ENCODE measurements at regions of chr7 and their contacts with region 1.

Region 1: GRCh38 chr7:29189743-29190201 is 4.8 kb upstream of the CHN2 start:
- DNase-seq: peak in 32 of 35 experiments; percentile 20 to 74 (median 42)
- ATAC-seq: peak; percentile 51 to 69 (median 62)
- H3K4me3 ChIP-seq: no peak overlapping the region
- H3K4me3 Mint-ChIP-seq: no peak overlapping the region
- H3K27ac ChIP-seq: no peak overlapping the region
- H3K27ac Mint-ChIP-seq: no peak overlapping the region
- H3K4me1 ChIP-seq: peaks cover 0 to 9% of the 10 kb centered on the region in 2 experiments
- H3K4me1 Mint-ChIP-seq: peaks cover 0 to 5% (median 0%) of the 10 kb centered on the region in 3 donors
- H3K27me3 ChIP-seq: peaks cover 0 to 12% of the 10 kb centered on the region in 2 experiments
- H3K27me3 Mint-ChIP-seq: peaks cover 12 to 23% of the 10 kb centered on the region in 2 donors

Region 2: DNA sequence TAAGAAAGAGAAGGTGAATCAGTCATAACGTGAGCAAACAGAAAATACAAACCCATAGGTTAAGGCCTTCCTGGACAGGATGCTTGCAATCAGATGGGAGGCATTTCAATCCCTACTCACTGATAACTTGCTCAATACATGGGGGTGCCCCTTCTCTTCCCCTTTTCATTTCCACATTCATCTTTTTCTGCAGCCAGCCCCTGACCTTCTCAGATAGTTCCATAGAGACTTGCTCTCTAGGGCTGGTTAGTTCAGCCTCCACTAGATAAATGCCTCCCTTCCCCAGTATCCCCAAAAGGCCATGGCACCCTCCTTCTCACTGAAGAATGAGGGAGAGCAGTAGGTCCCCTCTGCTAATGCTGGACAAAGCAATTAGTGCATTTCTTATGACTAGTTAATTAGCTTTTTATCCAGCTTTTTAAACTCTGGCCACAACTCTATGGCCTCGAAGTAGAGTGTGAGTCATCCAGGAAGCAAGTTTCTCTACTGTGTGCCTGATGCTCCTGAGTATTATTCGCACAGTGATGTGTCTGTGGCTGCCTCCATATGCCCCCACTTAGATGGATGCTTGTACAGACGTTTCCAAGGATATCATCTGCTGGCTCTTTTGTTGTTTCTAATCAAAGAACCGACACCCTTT is 17.5 kb after region 1 on chr7:
- CTCF ChIA-PET with region 1: no interaction called
- POLR2A ChIA-PET with region 1: no interaction called
- DNase-seq: no peak
- ATAC-seq: peak in 3 of 4 experiments; percentile 22 to 69 (median 43)
- H3K4me3 ChIP-seq: no peak overlapping the region
- H3K4me3 Mint-ChIP-seq: no peak overlapping the region
- H3K27ac ChIP-seq: no peak overlapping the region
- H3K27ac Mint-ChIP-seq: no peak overlapping the region
- H3K4me1 ChIP-seq: peaks cover 9 to 12% of the 10 kb centered on the region in 2 experiments
- H3K4me1 Mint-ChIP-seq: peaks cover 10 to 19% (median 15%) of the 10 kb centered on the region in 3 donors
- H3K27me3 ChIP-seq: no peaks in the 10 kb centered on the region
- H3K27me3 Mint-ChIP-seq: no peaks in the 10 kb centered on the region

Region 3: DNA sequence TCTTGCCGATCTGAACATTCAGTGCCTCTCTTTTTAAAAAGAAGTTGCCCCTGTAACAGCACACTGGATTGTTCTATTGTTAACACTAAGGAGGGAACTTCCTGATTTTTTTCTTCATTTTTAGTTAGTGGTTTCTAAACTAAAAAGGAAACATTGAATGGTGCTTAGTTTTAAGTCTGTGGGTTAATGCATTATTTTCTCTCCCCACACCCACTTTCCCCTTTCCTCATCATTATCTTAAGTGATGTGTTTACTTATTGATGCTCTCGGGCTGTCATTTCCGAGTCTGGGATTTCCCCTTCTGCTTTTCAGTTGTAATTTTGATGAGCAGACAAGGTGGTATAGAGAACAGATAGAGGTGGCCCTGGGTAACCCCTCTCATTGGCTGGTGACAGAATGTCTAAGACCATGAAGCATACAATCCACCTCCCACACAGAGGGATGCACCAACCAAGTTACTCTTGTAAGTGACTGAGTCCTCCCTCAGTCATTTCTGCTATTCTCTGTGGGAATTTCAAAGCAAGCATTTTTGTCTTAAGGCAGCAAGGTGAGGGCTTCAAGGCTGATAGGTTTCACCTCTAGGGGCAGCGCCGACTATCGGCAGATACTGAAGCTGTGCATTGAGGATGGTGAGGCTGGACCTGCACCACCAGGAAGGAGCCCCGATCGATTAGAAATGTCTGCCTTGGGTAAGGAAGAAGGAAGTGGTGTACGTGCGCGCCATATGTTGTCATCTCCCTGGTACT is 54.3 kb after region 1 on chr7:
- CTCF ChIA-PET with region 1: no interaction called
- POLR2A ChIA-PET with region 1: no interaction called
- DNase-seq: peak in 28 of 35 experiments; percentile 9 to 64 (median 20)
- ATAC-seq: peak; percentile 52 to 93 (median 62)
- H3K4me3 ChIP-seq: no peak overlapping the region
- H3K4me3 Mint-ChIP-seq: peak overlapping the region in 1 of 3 donors; percentile 18
- H3K27ac ChIP-seq: no peak overlapping the region
- H3K27ac Mint-ChIP-seq: peak overlapping the region in 1 of 2 donors; percentile 33
- H3K4me1 ChIP-seq: peaks cover 4 to 13% of the 10 kb centered on the region in 2 experiments
- H3K4me1 Mint-ChIP-seq: peaks cover 16 to 19% (median 17%) of the 10 kb centered on the region in 3 donors
- H3K27me3 ChIP-seq: no peaks in the 10 kb centered on the region
- H3K27me3 Mint-ChIP-seq: no peaks in the 10 kb centered on the region

Region 4: DNA sequence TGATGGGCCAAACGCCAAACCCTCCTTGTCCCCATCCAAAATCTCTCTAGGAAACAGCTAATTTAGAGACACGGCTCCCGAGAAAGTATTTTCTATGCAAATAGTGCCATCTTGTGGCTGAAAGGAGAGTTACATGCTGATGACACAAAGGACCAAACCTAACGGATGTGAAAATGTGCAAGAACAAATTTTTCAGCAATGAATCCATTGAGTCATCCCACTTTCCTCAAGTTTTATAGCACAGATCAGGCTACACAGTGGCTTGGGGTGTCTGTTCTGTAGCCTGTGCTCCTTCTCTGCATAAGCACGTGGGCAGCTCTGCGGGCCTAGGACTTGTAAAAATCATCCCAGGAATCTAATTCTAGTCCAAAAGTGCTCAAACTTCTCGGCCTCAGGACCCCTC is 219.1 kb after region 1 on chr7:
- CTCF ChIA-PET with region 1: interaction called, 30 to 36 read pairs
- POLR2A ChIA-PET with region 1: no interaction called
- DNase-seq: peak in 28 of 35 experiments; percentile 2 to 79 (median 27)
- ATAC-seq: peak; percentile 48 to 62 (median 55)
- H3K4me3 ChIP-seq: no peak overlapping the region
- H3K4me3 Mint-ChIP-seq: no peak overlapping the region
- H3K27ac ChIP-seq: no peak overlapping the region
- H3K27ac Mint-ChIP-seq: no peak overlapping the region
- H3K4me1 ChIP-seq: no peaks in the 10 kb centered on the region
- H3K4me1 Mint-ChIP-seq: no peaks in the 10 kb centered on the region
- H3K27me3 ChIP-seq: no peaks in the 10 kb centered on the region
- H3K27me3 Mint-ChIP-seq: no peaks in the 10 kb centered on the region

Region 5: DNA sequence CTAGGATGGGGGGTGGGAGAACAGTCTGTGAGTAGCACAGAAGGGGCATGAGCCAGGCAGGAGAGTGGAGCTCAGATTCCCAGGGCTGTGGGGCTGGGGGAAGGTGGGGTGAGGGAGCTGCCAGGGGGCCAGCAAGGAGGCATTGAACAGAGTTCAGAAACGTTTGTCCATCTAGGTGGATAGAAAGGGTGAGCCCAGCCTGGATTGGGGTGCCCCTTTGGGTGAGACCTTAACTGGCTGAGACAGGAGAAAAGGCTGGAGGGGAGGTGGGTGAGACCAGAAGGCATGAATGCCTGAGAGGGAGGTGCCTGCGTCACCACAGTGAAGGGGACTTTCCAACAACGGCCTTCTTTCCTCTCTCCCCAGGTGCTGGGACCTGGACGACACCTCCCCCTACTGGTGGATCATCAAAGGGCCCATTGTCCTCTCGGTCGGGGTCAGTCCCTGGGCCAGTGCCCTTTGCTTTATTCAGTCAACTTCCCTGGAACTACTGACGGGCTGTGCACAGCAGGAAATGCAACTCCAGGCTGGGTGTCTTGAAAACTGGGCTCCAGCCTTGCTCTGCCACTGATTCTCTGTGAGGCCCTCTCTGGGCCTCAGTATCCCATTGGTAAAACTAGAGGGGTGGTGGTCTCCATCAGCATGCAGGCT is 1785.0 kb after region 1 on chr7:
- CTCF ChIA-PET with region 1: no interaction called
- POLR2A ChIA-PET with region 1: no interaction called
- DNase-seq: peak in 5 of 35 experiments; percentile 3 to 45 (median 7)
- ATAC-seq: peak in 1 of 4 experiments; percentile 78
- H3K4me3 ChIP-seq: no peak overlapping the region
- H3K4me3 Mint-ChIP-seq: no peak overlapping the region
- H3K27ac ChIP-seq: no peak overlapping the region
- H3K27ac Mint-ChIP-seq: no peak overlapping the region
- H3K4me1 ChIP-seq: no peaks in the 10 kb centered on the region
- H3K4me1 Mint-ChIP-seq: peaks cover 0 to 2% (median 0%) of the 10 kb centered on the region in 3 donors
- H3K27me3 ChIP-seq: peaks cover 2 to 37% of the 10 kb centered on the region in 2 experiments
- H3K27me3 Mint-ChIP-seq: peaks cover 32 to 34% of the 10 kb centered on the region in 2 donors